A673 (cell line): ENCODE measurements at regions of chr14 and their contacts with region 1.

Region 1: DNA sequence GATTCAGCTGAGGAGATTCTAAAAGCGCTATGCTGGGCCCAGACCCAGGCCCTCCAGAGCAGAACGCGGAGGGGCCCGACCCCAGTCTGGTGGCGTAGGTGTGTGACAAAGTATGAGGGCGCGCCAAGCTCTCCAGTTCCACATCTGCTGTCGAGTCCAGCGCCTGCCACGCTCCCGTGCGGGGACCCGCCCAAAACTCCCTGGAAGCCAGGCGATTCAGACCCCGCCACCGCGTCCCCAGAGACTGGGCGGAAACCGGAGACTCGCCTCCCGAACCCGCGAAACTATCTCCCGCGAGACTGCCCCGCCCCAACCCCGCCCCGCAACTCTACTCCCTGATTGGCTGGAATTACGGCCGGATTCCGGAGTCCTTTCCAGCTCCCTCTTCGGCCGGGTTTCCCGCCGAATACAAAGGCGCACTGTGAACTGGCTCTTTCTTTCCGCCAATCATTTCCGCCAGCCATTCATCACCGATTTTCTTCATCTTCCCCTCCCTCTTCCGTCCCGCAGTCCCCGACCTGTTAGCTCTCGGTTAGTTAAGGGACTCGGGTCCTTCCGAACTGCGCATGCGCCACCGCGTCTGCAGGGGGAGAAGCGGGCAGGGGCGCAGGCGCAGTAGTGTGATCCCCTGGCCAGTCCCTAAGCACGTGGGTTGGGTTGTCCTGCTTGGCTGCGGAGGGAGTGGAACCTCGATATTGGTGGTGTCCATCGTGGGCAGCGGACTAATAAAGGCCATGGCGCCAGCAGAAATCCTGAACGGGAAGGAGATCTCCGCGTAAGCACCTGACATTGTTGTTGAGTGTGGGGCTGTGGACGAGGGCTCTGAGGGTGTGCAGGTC is at the start of gene MTHFD1:
- DNase-seq: peak; percentile 100
- H3K4me3 ChIP-seq: peak within 1 kb of the TSS; percentile 68
- H3K27ac ChIP-seq: peak within 1 kb of the TSS; percentile 94
- H3K4me1 ChIP-seq: peaks cover 13% of the 10 kb centered on the region
- H3K27me3 ChIP-seq: no peaks in the 10 kb centered on the region
- CTCF ChIP-seq: no peak
- total RNA-seq, gene MTHFD1: 286 and 293 TPM in 2 replicates

Region 2: DNA sequence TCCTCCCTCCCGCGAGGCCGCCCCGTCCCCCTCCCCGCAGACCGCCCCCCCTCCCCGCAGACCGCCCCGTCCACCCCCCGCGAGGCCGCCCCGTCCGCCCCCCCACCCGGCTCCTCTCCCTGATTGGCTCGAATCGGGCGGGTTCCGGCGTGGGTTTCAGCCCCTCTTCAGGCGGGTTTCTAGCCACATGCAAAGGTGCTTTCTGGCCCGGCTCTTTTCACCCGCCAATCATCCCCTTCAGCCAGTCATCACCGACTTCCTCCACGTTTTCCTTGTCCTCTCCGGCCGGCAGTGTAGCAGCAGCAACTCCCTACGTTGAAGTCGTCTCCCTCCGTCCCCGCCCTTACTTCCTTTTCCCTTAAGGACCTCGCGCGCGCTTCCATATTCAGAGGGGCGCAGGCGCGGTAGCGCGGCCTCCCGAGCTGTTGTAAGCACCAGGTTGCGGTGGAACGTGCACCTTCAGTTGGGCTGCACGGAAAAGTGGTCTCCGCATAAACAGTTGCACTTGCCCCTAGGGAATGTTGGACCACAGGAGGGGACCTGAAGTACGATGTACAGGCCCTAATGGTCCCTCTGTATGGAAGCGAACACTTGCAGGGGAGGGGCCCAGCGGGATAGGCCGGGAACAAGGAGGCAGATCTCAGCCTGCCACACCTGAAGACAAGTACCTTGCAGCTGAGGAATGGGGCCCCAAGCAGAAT is 49.1 kb before region 1 on chr14:
- CTCF ChIA-PET with region 1: interaction called, 4 read pairs
- POLR2A ChIA-PET with region 1: no interaction called
- intact Hi-C with region 1: loop called (anchors 5 kb)
- DNase-seq: peak; percentile 99
- H3K4me3 ChIP-seq: peak overlapping the region; percentile 79
- H3K27ac ChIP-seq: peak overlapping the region; percentile 94
- H3K4me1 ChIP-seq: peaks cover 10% of the 10 kb centered on the region
- H3K27me3 ChIP-seq: no peaks in the 10 kb centered on the region
- CTCF ChIP-seq: no peak

Region 3: GRCh38 chr14:64410084-64410774 is 22.3 kb after region 1 on chr14:
- CTCF ChIA-PET with region 1: no interaction called
- POLR2A ChIA-PET with region 1: interaction called, 15 read pairs
- intact Hi-C with region 1: no loop called
- DNase-seq: no peak
- H3K4me3 ChIP-seq: no peak overlapping the region
- H3K27ac ChIP-seq: no peak overlapping the region
- H3K4me1 ChIP-seq: no peaks in the 10 kb centered on the region
- H3K27me3 ChIP-seq: no peaks in the 10 kb centered on the region
- CTCF ChIP-seq: no peak

Region 4: GRCh38 chr14:64438181-64438841 is 50.4 kb after region 1 on chr14:
- CTCF ChIA-PET with region 1: no interaction called
- POLR2A ChIA-PET with region 1: no interaction called
- intact Hi-C with region 1: no loop called
- DNase-seq: no peak
- H3K4me3 ChIP-seq: no peak overlapping the region
- H3K27ac ChIP-seq: no peak overlapping the region
- H3K4me1 ChIP-seq: no peaks in the 10 kb centered on the region
- H3K27me3 ChIP-seq: no peaks in the 10 kb centered on the region
- CTCF ChIP-seq: no peak

Region 5: GRCh38 chr14:64540208-64541157 is 152.6 kb after region 1 on chr14 and contains the start of gene HSPA2:
- CTCF ChIA-PET with region 1: no interaction called
- POLR2A ChIA-PET with region 1: interaction called, 11 read pairs
- intact Hi-C with region 1: no loop called
- DNase-seq: peak; percentile 99
- H3K4me3 ChIP-seq: peak within 1 kb of the TSS; percentile 59
- H3K27ac ChIP-seq: peak within 1 kb of the TSS; percentile 76
- H3K4me1 ChIP-seq: no peaks in the 10 kb centered on the region
- H3K27me3 ChIP-seq: no peaks in the 10 kb centered on the region
- CTCF ChIP-seq: peak; percentile 86
- total RNA-seq, gene HSPA2: 13.8 and 14.3 TPM in 2 replicates